ENCODE measurements at regions of chr16 and their contacts with region 1.

Region 1: GRCh38 chr16:73068541-73069401 is 20.8 kb upstream of the ZFHX3 start:
- DNase-seq: peak; percentile 92
- H3K4me3 ChIP-seq: no peak overlapping the region
- H3K27ac ChIP-seq: peak overlapping the region; percentile 92
- H3K4me1 ChIP-seq: peaks cover 76% of the 10 kb centered on the region
- H3K27me3 ChIP-seq: no peaks in the 10 kb centered on the region
- CTCF ChIP-seq: no peak
- POLR2A ChIP-seq: peak; percentile 78

Region 2: GRCh38 chr16:72241930-72242329 is 826.8 kb before region 1 on chr16:
- CTCF ChIA-PET with region 1: interaction called, 3 read pairs
- POLR2A ChIA-PET with region 1: no interaction called
- dilution Hi-C with region 1: no loop called
- intact Hi-C with region 1: loop called (anchors 10 kb)
- DNase-seq: peak; percentile 66
- H3K4me3 ChIP-seq: no peak overlapping the region
- H3K27ac ChIP-seq: no peak overlapping the region
- H3K4me1 ChIP-seq: no peaks in the 10 kb centered on the region
- H3K27me3 ChIP-seq: no peaks in the 10 kb centered on the region
- CTCF ChIP-seq: peak; percentile 79 to 85
- POLR2A ChIP-seq: no peak

Region 3: DNA sequence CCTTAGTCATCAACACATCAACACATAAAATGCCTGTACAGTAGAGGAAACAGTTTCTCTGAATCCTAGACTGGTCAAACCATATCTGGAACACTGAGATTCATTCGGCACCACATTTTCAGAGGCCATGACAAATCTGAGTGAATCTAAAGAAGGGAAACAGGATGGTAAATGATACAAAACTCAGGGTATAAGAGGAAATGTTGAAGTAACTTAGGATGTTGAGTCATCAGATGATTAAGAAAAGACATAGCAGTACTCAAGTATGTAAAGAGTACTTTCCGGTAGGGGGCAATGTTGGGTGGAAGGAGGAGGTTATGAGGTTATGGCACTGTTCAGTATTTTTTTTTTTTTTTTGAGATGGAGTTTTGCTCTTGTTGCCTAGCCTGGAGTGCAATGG is 538.3 kb before region 1 on chr16:
- CTCF ChIA-PET with region 1: no interaction called
- POLR2A ChIA-PET with region 1: no interaction called
- dilution Hi-C with region 1: no loop called
- intact Hi-C with region 1: loop called (anchors 1 kb)
- DNase-seq: peak; percentile 82
- H3K4me3 ChIP-seq: no peak overlapping the region
- H3K27ac ChIP-seq: peak overlapping the region; percentile 68
- H3K4me1 ChIP-seq: peaks cover 11% of the 10 kb centered on the region
- H3K27me3 ChIP-seq: no peaks in the 10 kb centered on the region
- CTCF ChIP-seq: peak; percentile 35 to 46
- POLR2A ChIP-seq: no peak

Region 4: DNA sequence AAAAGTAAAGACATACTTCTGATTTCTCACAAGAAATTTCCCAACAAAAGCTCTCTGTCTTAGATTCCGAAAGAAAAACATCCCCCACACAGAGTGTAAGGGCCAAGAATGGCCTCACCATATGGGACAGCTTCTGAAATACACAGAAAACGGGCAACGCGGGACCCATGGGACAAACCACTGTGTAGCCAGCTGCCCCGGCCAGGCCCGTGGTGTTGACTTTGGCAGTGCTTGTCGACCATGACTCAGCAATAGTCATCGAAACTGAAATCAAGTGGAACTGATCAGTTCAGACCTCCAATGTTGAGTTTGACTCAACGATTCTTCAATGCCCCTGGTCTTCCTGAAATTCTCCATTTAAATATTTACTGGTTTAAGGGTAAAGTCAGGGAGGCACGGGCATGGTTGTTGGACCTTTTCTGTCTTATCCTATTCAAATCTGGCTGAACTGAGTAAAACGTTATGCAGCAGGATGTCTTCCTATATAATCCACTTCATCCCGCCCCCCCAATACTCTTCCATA is 48.3 kb before region 1 on chr16:
- CTCF ChIA-PET with region 1: interaction called, 3 read pairs
- POLR2A ChIA-PET with region 1: no interaction called
- dilution Hi-C with region 1: no loop called
- intact Hi-C with region 1: loop called (anchors 1 kb)
- DNase-seq: peak; percentile 89
- H3K4me3 ChIP-seq: no peak overlapping the region
- H3K27ac ChIP-seq: peak overlapping the region; percentile 78
- H3K4me1 ChIP-seq: peaks cover 30% of the 10 kb centered on the region
- H3K27me3 ChIP-seq: no peaks in the 10 kb centered on the region
- CTCF ChIP-seq: no peak
- POLR2A ChIP-seq: peak; percentile 6

Region 5: DNA sequence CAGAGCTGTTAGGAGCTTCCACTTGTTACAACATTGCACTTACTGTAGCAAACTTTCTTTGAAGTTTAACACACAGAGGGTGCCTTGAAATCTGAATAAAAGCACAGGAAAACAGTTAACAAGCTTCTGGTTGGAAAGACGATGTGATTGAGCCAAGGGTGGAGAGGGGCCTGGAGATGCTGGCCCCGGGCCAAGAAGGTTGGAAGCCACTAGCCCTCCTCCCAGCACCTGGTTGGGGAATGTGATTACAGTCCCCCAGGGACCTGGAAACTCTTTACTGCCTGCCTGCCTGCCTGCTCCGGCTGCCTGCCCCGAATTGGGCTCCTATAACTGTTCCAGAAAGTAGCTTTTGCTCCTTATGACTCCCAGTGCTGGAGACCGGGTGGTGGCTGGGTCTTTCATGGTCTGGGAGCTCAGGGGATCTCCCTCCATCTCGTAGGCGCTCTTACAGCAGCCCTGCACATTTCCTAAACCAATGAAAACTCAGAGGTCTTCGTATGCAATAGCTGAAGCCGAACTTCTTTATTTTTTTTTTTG is 27.2 kb after region 1 on chr16:
- CTCF ChIA-PET with region 1: interaction called, 5 read pairs
- POLR2A ChIA-PET with region 1: no interaction called
- dilution Hi-C with region 1: no loop called
- intact Hi-C with region 1: loop called (anchors 1 kb)
- DNase-seq: peak; percentile 44
- H3K4me3 ChIP-seq: no peak overlapping the region
- H3K27ac ChIP-seq: no peak overlapping the region
- H3K4me1 ChIP-seq: peaks cover 27% of the 10 kb centered on the region
- H3K27me3 ChIP-seq: peaks cover 3 to 4% of the 10 kb centered on the region in 2 experiments
- CTCF ChIP-seq: no peak
- POLR2A ChIP-seq: no peak

Region 6: GRCh38 chr16:73154063-73154870 is 85.5 kb after region 1 on chr16:
- CTCF ChIA-PET with region 1: interaction called, 3 read pairs
- POLR2A ChIA-PET with region 1: no interaction called
- dilution Hi-C with region 1: no loop called
- intact Hi-C with region 1: loop called (anchors 1 kb)
- DNase-seq: peak; percentile 87
- H3K4me3 ChIP-seq: no peak overlapping the region
- H3K27ac ChIP-seq: peak overlapping the region; percentile 33
- H3K4me1 ChIP-seq: peaks cover 27% of the 10 kb centered on the region
- H3K27me3 ChIP-seq: peaks cover 0 to under 1% of the 10 kb centered on the region in 2 experiments
- CTCF ChIP-seq: no peak
- POLR2A ChIP-seq: peak; percentile 29

Region 7: GRCh38 chr16:73196670-73197069 is 127.9 kb after region 1 on chr16:
- CTCF ChIA-PET with region 1: interaction called, 4 read pairs
- POLR2A ChIA-PET with region 1: no interaction called
- dilution Hi-C with region 1: no loop called
- intact Hi-C with region 1: loop called (anchors 2 kb)
- DNase-seq: peak; percentile 78
- H3K4me3 ChIP-seq: no peak overlapping the region
- H3K27ac ChIP-seq: no peak overlapping the region
- H3K4me1 ChIP-seq: no peaks in the 10 kb centered on the region
- H3K27me3 ChIP-seq: peaks cover 5 to 10% of the 10 kb centered on the region in 2 experiments
- CTCF ChIP-seq: peak; percentile 56 to 60
- POLR2A ChIP-seq: no peak

Region 8: DNA sequence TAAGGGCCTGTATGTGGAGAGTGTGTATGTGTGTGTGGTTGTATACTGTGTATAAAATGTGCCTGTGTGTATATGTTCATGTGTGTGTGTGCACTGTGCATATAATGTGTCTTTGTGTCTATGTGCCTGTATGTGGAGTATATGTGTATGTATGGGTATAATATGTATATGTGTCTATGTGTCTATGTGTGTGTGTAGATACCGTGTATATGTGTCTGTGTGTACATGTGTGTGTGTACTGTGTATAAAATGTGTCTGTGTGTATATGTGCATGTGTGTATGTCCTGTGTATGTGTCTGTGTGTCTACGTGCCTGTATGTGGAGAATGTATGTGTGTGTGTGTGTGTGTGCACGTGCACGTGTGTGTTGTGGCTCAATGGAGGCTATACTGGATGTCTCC is 179.5 kb after region 1 on chr16:
- CTCF ChIA-PET with region 1: no interaction called
- POLR2A ChIA-PET with region 1: no interaction called
- dilution Hi-C with region 1: no loop called
- intact Hi-C with region 1: no loop called
- DNase-seq: no peak
- H3K4me3 ChIP-seq: no peak overlapping the region
- H3K27ac ChIP-seq: no peak overlapping the region
- H3K4me1 ChIP-seq: no peaks in the 10 kb centered on the region
- H3K27me3 ChIP-seq: no peaks in the 10 kb centered on the region
- CTCF ChIP-seq: no peak
- POLR2A ChIP-seq: no peak

Measured in endothelial cell of umbilical vein (primary cell).